Right lobe of liver (tissue), 6 donors: ENCODE measurements at regions of chr9 and their contacts with region 1.

Region 1: GRCh38 chr9:73183917-73184861 is 32.5 kb downstream of the ANXA1 start:
- DNase-seq: no peak
- ATAC-seq: peak in 2 of 4 donors; percentile 38 to 42
- H3K4me3 ChIP-seq: no peak overlapping the region
- H3K27ac ChIP-seq: no peak overlapping the region
- H3K4me1 ChIP-seq: no peaks in the 10 kb centered on the region
- H3K27me3 ChIP-seq: no peaks in the 10 kb centered on the region
- CTCF ChIP-seq: peak; percentile 53 to 63 (median 57)
- POLR2A ChIP-seq: no peak

Region 2: GRCh38 chr9:73104921-73105320 is 79.3 kb before region 1 on chr9:
- intact Hi-C with region 1: loop called (anchors 5 kb)
- DNase-seq: no peak
- ATAC-seq: no peak
- H3K4me3 ChIP-seq: no peak overlapping the region
- H3K27ac ChIP-seq: no peak overlapping the region
- H3K4me1 ChIP-seq: no peaks in the 10 kb centered on the region
- H3K27me3 ChIP-seq: no peaks in the 10 kb centered on the region
- CTCF ChIP-seq: no peak
- POLR2A ChIP-seq: no peak

Region 3: GRCh38 chr9:73114958-73115357 is 69.2 kb before region 1 on chr9:
- intact Hi-C with region 1: loop called in 1 of 2 experiments (anchors 5 kb)
- DNase-seq: no peak
- ATAC-seq: no peak
- H3K4me3 ChIP-seq: no peak overlapping the region
- H3K27ac ChIP-seq: no peak overlapping the region
- H3K4me1 ChIP-seq: no peaks in the 10 kb centered on the region
- H3K27me3 ChIP-seq: no peaks in the 10 kb centered on the region
- CTCF ChIP-seq: no peak
- POLR2A ChIP-seq: no peak